Activated CD4-positive, alpha-beta memory T cell treated with anti-CD3 and anti-CD28 coated beads, Interleukin-2, amount 10 ng/mL, durations not matched to agents 7 days and 5 days (primary cell): ENCODE measurements at regions of chr7 and their contacts with region 1.

Region 1: GRCh38 chr7:43700059-43700501 is 29.2 kb downstream of the COA1 start:
- DNase-seq: no peak
- H3K4me3 Mint-ChIP-seq: no peak overlapping the region
- H3K27ac Mint-ChIP-seq: no peak overlapping the region
- H3K4me1 Mint-ChIP-seq: peaks cover 56% of the 10 kb centered on the region
- H3K27me3 Mint-ChIP-seq: no peaks in the 10 kb centered on the region

Region 2: GRCh38 chr7:43612599-43613589 is 87.2 kb before region 1 on chr7:
- CTCF ChIA-PET with region 1: interaction called, 14 read pairs
- POLR2A ChIA-PET with region 1: interaction called, 5 read pairs
- DNase-seq: no peak
- H3K4me3 Mint-ChIP-seq: no peak overlapping the region
- H3K27ac Mint-ChIP-seq: peak overlapping the region; percentile 79
- H3K4me1 Mint-ChIP-seq: peaks cover 46% of the 10 kb centered on the region
- H3K27me3 Mint-ChIP-seq: no peaks in the 10 kb centered on the region

Region 3: DNA sequence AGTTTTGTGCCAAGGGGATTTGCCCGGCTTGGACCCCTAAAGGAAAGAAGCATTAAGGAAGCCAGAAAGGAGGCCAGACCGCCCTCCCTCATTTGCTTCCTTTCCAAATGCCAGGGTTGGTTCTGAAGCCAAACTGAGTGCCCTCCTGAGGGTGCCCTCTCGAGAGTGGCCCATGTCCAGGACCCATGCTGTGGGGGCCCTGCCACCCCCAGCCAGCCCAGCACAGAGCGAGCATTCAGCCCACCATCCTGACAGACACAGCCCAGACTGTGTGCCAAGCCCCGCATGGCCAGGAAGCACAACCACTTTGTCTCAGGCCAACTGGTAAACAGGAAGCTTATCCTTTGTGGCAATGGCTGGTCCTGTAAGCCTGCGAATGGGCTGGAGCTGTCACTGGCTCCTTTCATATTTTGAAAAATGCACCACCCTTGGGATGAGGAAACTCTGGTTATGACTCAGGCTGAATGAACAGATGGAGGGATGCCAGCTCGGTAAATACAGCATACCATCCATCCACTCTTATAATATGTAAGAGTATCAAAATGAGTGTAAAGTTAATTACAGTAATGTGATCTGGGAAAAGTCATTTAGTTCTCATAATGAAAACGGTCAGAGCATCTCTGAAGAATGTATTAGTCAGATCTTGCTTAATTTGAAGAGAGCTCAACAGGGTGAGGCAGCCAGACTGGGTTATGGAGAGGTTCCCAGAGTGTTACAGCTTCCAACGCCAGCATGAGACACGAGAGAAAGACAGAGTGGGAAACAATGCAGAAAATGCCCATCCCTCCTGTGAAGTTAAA is 52.2 kb before region 1 on chr7:
- CTCF ChIA-PET with region 1: interaction called, 38 read pairs
- POLR2A ChIA-PET with region 1: interaction called, 35 read pairs
- DNase-seq: peak; percentile 57
- H3K4me3 Mint-ChIP-seq: peak overlapping the region; percentile 73
- H3K27ac Mint-ChIP-seq: peak overlapping the region; percentile 98
- H3K4me1 Mint-ChIP-seq: peaks cover 93% of the 10 kb centered on the region
- H3K27me3 Mint-ChIP-seq: no peaks in the 10 kb centered on the region

Region 4: GRCh38 chr7:43721193-43721806 is 21.2 kb after region 1 on chr7:
- CTCF ChIA-PET with region 1: interaction called, 10 read pairs
- POLR2A ChIA-PET with region 1: no interaction called
- DNase-seq: no peak
- H3K4me3 Mint-ChIP-seq: no peak overlapping the region
- H3K27ac Mint-ChIP-seq: no peak overlapping the region
- H3K4me1 Mint-ChIP-seq: peaks cover 31% of the 10 kb centered on the region
- H3K27me3 Mint-ChIP-seq: no peaks in the 10 kb centered on the region

Region 5: DNA sequence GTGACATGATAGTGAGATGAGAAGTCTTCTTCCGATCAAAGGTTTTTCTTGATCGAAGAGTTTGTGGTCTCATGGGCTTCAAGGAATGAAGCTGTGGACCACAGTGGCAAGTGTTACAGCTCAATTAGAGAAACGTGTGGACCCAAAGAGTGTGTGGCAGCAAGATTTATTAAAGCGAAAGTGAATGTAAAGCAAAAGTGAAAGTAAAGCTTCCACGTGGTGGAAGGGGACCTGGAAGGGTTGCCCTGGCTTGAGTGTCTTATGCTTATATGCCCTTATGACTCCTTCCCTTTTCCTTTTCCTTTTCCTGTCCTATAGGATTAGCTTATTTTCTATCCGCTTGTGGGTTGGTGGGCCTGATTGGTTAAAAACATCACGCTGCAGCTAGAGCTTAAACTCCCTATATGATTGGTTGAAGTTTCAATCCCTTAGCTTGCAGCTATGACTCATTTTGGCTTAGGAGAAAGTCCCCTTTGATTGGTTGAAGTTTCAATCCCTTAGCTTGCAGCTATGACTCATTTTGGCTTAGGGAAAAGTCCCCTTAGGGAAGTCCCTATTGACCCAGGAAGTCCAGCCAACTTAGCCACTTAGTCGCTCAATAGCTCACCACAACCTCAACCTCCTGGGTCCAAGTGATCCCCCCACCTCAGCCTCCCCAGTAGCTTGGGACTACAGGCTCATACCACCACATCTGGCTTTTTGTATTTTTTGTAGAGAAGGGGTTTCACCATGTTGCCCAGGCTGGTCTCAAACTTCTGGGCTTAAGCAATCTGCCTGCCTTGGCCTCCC is 134.6 kb after region 1 on chr7:
- CTCF ChIA-PET with region 1: interaction called, 29 read pairs
- POLR2A ChIA-PET with region 1: interaction called, 3 read pairs
- DNase-seq: peak; percentile 37
- H3K4me3 Mint-ChIP-seq: peak overlapping the region; percentile 84
- H3K27ac Mint-ChIP-seq: peak overlapping the region; percentile 63
- H3K4me1 Mint-ChIP-seq: peaks cover 25% of the 10 kb centered on the region
- H3K27me3 Mint-ChIP-seq: peaks cover 4% of the 10 kb centered on the region

Region 6: GRCh38 chr7:43977525-43977924 is 277.4 kb after region 1 on chr7:
- CTCF ChIA-PET with region 1: no interaction called
- POLR2A ChIA-PET with region 1: no interaction called
- DNase-seq: no peak
- H3K4me3 Mint-ChIP-seq: no peak overlapping the region
- H3K27ac Mint-ChIP-seq: no peak overlapping the region
- H3K4me1 Mint-ChIP-seq: no peaks in the 10 kb centered on the region
- H3K27me3 Mint-ChIP-seq: no peaks in the 10 kb centered on the region